Dorsolateral prefrontal cortex (tissue), 120 donors: ENCODE measurements at regions of chr5 and their contacts with region 1.

Region 1: GRCh38 chr5:67896311-67896929 is 319.1 kb upstream of the PIK3R1 start:
- DNase-seq: no peak
- H3K4me3 ChIP-seq: no peak overlapping the region
- H3K27ac ChIP-seq: no peak overlapping the region
- H3K27me3 ChIP-seq: no peaks in the 10 kb centered on the region
- CTCF ChIP-seq: no peak

Region 2: DNA sequence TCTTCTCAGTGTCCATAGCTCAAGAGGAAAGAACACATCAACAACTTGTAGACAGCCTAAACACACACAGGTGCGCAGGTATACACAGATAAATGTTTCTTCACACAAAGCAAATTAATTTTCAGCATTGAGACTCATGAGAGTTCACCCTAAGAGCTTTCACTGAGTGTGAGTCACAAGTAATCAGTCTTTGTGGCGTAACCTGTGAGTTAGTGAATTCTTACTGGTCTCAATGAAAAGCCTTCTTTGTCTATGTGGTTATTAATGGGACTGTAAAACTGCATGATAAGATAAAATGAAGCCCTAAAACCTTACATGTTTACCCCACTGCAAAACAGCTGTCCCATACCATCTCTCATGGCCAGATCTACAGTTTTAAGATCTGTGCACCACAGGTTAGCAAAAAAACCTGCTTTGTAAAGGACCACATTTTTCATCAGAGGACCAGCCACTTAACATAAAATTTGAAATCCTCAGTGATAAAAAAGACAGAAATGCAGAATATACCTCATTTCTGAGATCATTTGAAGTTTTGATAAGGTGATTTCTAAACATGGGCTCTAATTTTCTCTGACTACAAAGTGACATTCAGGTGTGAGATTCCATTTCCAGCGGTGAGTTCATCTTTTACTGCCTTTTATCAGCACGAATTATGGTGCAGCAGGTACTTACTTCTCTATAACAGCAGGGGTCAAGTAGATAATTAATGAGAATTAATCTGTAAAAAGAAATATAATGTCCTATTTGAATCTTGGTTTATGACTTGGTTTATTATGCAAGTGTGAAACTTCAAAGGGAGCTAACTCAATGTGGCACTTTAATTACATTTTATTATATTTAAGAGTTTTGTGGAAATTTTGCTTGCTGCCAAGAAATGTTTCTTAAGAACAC is 16.6 kb before region 1 on chr5:
- intact Hi-C with region 1: loop called in 1 of 2 experiments (anchors 2 kb)
- DNase-seq: no peak
- H3K4me3 ChIP-seq: no peak overlapping the region
- H3K27ac ChIP-seq: no peak overlapping the region
- H3K27me3 ChIP-seq: no peaks in the 10 kb centered on the region
- CTCF ChIP-seq: no peak